ENCODE measurements at regions of chrX and their contacts with region 1.

Region 1: GRCh38 chrX:55488593-55489313 is 895 bp downstream of the USP51 start:
- DNase-seq: peak; percentile 64
- H3K4me3 ChIP-seq: peak overlapping the region; percentile 75
- H3K27ac ChIP-seq: peak overlapping the region; percentile 77
- H3K4me1 ChIP-seq: peaks cover 12% of the 10 kb centered on the region
- CTCF ChIP-seq: peak; percentile 27; the same call in 1 of the 2 replicates

Region 2: GRCh38 chrX:55451990-55452832 is 36.5 kb before region 1 on chrX and contains the start of gene MAGEH1:
- CTCF ChIA-PET with region 1: interaction called, 6 read pairs
- POLR2A ChIA-PET with region 1: interaction called, 19 read pairs
- intact Hi-C with region 1: no loop called
- DNase-seq: peak; percentile 86
- H3K4me3 ChIP-seq: peak within 1 kb of the TSS; percentile 82
- H3K27ac ChIP-seq: peak within 1 kb of the TSS; percentile 55
- H3K4me1 ChIP-seq: no peaks in the 10 kb centered on the region
- CTCF ChIP-seq: no peak
- total RNA-seq, gene MAGEH1: 16.9 and 19.7 TPM in 2 replicates